ENCODE measurements at regions of chr12 and their contacts with region 1.

Region 1: DNA sequence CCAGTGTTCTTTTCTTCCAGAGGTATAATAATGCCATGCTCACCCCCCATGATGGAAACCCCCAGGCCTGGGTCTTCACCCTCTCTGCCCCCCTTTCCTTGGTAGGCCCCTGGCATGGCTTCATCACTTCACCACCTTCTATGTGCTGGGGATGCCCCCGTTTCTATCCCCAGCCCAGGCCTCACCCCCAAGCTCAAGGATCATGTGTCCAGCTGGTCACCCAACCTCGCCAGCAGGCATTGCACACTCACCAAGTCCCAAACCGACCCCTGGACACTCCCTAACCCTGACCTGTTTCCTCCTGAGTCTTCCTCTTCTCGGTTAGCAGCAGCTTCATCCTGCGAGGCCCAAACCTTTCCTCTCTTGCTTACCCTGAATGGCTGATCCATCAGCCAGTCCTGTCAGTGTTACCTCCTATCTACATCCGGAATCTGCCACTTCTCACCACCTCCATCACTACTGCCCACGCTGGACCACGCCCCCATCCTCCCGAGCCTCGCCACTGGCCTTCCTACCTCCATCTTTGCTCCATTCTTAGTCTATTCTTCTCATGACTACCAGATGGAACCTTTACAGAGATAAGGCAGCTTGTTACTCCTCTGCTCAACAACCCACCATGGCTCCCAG is 69.0 kb downstream of the MVK start:
- DNase-seq: no peak
- H3K4me3 ChIP-seq: no peak overlapping the region
- H3K27ac ChIP-seq: no peak overlapping the region
- H3K4me1 ChIP-seq: no peaks in the 10 kb centered on the region
- H3K27me3 ChIP-seq: peaks cover 45% of the 10 kb centered on the region
- CTCF ChIP-seq: no peak

Region 2: GRCh38 chr12:109549613-109550270 is 92.9 kb before region 1 on chr12:
- CTCF ChIA-PET with region 1: interaction called, 17 read pairs
- POLR2A ChIA-PET with region 1: no interaction called
- intact Hi-C with region 1: no loop called
- DNase-seq: no peak
- H3K4me3 ChIP-seq: no peak overlapping the region
- H3K27ac ChIP-seq: no peak overlapping the region
- H3K4me1 ChIP-seq: peaks cover 19% of the 10 kb centered on the region
- H3K27me3 ChIP-seq: no peaks in the 10 kb centered on the region
- CTCF ChIP-seq: no peak

Region 3: DNA sequence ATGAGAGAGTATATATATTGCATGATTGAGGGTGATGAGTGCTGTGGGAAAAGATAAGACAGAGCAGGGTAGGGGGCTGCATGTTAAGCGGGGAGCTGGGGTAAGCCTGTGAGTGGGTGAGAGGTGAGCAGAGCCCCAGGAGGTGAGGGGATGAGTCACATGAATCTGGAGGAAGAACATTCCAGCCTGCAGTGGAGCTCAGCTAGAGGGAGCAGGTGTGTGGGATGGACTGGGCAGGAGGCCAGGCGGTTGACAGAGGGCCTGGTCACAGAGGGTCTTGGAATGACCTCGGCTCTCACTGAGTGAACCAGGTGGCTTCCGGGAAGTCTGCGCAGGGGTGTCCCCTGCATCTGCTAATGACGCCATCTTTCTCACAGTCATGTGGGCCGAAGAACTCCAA is 309.1 kb after region 1 on chr12:
- CTCF ChIA-PET with region 1: no interaction called
- POLR2A ChIA-PET with region 1: no interaction called
- intact Hi-C with region 1: no loop called
- DNase-seq: peak; percentile 85 to 88
- H3K4me3 ChIP-seq: 0 out of 2 replicates have a peak overlapping the region, but pooled peaks have one; percentile 9
- H3K27ac ChIP-seq: peak overlapping the region; percentile 91
- H3K4me1 ChIP-seq: peaks cover 32% of the 10 kb centered on the region
- H3K27me3 ChIP-seq: no peaks in the 10 kb centered on the region
- CTCF ChIP-seq: no peak